Transverse colon (tissue), 4 donors: ENCODE measurements at regions of chr11 and their contacts with region 1.

Region 1: DNA sequence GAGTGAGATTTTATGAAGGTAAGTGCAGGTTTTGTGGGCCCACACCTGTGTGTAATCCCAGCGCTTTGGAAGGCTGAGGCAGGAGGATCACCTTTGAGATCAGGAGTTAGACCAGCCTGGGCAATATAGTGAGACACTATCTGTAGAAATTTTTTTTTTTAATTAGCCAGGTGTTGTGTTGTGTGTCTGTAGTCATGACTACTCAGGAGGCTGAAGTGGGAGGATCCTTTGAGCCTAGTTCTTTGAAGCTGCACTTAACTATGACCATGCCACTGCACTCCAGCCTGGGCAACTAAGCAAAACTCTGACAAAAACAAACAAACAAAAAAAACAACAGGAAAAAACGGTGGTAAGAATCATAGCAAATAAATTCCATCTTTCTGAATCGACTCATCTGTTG is 268.6 kb upstream of the PDGFD start:
- DNase-seq: no peak
- H3K4me3 ChIP-seq: no peak overlapping the region
- H3K27ac ChIP-seq: no peak overlapping the region
- H3K4me1 ChIP-seq: no peaks in the 10 kb centered on the region
- H3K27me3 ChIP-seq: no peaks in the 10 kb centered on the region
- CTCF ChIP-seq: no peak
- EP300 ChIP-seq: no peak
- POLR2A ChIP-seq: no peak

Region 2: DNA sequence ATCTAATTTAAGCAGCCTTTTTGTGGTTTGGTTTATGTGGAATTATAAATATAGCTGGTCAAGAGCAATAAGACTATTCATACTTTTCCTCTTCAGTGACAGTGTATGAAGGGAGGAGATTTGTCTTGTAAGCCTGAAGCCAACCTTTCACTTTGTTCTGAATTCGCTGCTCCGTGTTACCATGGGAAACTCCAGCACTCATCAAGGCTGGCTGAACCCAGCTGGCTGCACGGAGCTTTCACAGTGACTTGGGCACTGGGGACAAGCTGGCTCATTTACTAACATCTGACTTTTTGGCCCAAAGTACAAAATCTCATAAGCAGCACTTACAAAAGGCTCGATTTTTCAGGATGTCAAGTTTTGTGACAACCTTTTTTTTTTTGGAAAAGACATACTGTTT is 1056.9 kb after region 1 on chr11:
- in situ Hi-C with region 1: no loop called
- intact Hi-C with region 1: loop called (anchors 5 kb)
- DNase-seq: no peak
- H3K4me3 ChIP-seq: no peak overlapping the region
- H3K27ac ChIP-seq: no peak overlapping the region
- H3K4me1 ChIP-seq: no peaks in the 10 kb centered on the region
- H3K27me3 ChIP-seq: no peaks in the 10 kb centered on the region
- CTCF ChIP-seq: no peak
- EP300 ChIP-seq: no peak
- POLR2A ChIP-seq: no peak